ENCODE measurements at regions of chr14 and their contacts with region 1.

Region 1: DNA sequence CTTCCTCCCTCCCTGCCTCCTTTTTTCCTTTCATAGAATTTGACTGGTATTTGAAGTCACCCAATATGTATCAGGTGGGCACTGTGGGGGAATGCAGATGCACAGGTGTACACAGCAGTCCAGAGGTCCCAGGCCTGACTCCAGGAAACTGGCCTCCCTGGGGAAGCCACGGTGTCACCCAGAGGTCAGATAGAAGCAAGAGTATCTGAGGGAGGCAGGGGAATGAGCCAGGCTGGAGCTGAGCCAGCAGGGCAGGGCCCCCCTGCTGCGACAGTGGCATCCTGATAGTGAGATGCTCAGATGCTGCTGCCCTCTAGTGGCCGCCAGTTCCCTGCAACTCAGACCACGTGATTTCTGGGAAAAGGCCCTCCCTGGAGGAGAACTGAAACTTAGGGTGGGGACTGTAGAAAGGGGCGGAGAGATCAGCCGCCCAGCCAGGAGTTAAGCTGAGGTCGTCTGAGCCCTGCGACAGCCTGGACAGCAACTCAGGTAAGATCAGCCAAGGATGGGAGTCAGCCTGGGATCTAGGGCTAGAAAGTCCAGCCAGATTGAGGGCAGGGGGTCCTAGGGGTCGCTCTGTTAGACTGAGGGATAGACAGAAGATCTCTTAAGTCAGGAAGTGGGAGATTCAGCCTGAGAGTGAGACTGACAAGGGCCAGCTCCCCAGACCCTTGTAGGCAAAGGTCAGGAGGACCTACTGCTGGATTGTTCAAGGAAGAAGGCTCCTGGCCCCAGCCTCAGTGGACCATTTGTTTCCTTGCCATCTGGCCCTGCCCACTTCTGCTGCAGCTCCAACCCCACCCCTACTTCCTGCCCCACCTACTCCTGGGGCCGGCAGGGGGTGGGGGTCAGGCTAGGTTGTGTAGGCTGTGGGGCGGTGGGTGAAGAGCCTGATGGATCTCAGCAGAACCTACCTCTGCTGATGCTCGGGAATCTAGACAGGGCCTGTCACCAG is at the start of gene IRF9:
- DNase-seq: peak; percentile 97
- H3K4me3 ChIP-seq: peak within 1 kb of the TSS; percentile 37 to 79 (median 67)
- H3K27ac ChIP-seq: peak within 1 kb of the TSS; percentile 78
- H3K4me1 ChIP-seq: peaks cover 16% of the 10 kb centered on the region
- H3K27me3 ChIP-seq: no peaks in the 10 kb centered on the region
- CTCF ChIP-seq: peak; percentile 95 to 97
- POLR2A ChIP-seq: peak; percentile 88
- total RNA-seq, gene IRF9: 33.2 and 46.1 TPM in 2 replicates

Region 2: DNA sequence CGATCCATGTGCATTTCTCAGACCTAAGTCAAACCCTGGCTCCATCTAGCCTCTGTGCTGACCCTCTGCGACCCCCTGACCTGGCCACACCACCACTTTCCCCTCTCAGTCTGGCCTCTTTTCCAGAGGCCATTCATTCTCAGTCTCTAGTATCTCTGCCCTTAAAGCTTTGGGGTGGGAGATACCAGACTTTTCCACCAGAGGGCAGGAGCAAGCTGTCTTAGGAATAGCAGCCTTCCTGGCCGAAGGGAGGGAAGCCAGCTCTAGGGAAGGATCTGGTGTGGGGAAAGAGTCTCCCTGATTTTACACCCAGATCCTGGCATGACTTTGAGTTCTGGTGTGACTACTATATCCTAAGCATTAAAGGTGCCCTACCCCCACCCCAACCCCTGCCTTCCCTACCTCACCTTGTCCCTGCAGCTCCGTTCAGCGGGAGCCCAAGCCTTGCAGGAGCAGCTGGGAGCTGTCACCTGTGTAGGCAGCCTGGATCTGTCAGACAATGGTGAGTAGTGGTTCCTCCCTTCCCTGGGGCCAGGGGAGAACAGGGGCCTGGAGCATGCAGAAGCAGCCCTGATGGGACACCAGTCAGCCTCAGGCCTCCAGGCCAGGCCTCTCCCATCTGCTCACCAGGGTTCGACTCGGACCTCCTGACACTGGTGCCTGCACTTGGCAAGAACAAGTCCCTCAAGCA is 102.7 kb before region 1 on chr14:
- CTCF ChIA-PET with region 1: interaction called, 48 read pairs
- POLR2A ChIA-PET with region 1: no interaction called
- dilution Hi-C with region 1: no loop called
- intact Hi-C with region 1: loop called (anchors 1 kb)
- DNase-seq: peak; percentile 44
- H3K4me3 ChIP-seq: no peak overlapping the region
- H3K27ac ChIP-seq: no peak overlapping the region
- H3K4me1 ChIP-seq: no peaks in the 10 kb centered on the region
- H3K27me3 ChIP-seq: no peaks in the 10 kb centered on the region
- CTCF ChIP-seq: peak; percentile 62 to 64
- POLR2A ChIP-seq: no peak

Region 3: GRCh38 chr14:24108336-24108874 is 52.7 kb before region 1 on chr14:
- CTCF ChIA-PET with region 1: interaction called, 16 read pairs
- POLR2A ChIA-PET with region 1: no interaction called
- dilution Hi-C with region 1: no loop called
- intact Hi-C with region 1: no loop called
- DNase-seq: no peak
- H3K4me3 ChIP-seq: no peak overlapping the region
- H3K27ac ChIP-seq: no peak overlapping the region
- H3K4me1 ChIP-seq: peaks cover 18% of the 10 kb centered on the region
- H3K27me3 ChIP-seq: no peaks in the 10 kb centered on the region
- CTCF ChIP-seq: no peak
- POLR2A ChIP-seq: no peak

Region 4: GRCh38 chr14:24141097-24141880 is 19.8 kb before region 1 on chr14 and contains the start of gene EMC9:
- CTCF ChIA-PET with region 1: interaction called, 63 read pairs
- POLR2A ChIA-PET with region 1: interaction called, 6 read pairs
- dilution Hi-C with region 1: no loop called
- intact Hi-C with region 1: loop called (anchors 1 kb)
- DNase-seq: peak; percentile 100
- H3K4me3 ChIP-seq: peak within 1 kb of the TSS; percentile 79 to 99 (median 81)
- H3K27ac ChIP-seq: peak within 1 kb of the TSS; percentile 42
- H3K4me1 ChIP-seq: peaks cover 24% of the 10 kb centered on the region
- H3K27me3 ChIP-seq: no peaks in the 10 kb centered on the region
- CTCF ChIP-seq: peak; percentile 28 to 53
- POLR2A ChIP-seq: peak; percentile 78
- total RNA-seq, gene EMC9: 19.0 and 21.8 TPM in 2 replicates

Region 5: GRCh38 chr14:24188251-24189058 is 27.3 kb after region 1 on chr14 and contains the start of gene IPO4:
- CTCF ChIA-PET with region 1: interaction called, 3 read pairs
- POLR2A ChIA-PET with region 1: interaction called, 3 read pairs
- dilution Hi-C with region 1: no loop called
- intact Hi-C with region 1: loop called (anchors 2 kb)
- DNase-seq: peak; percentile 94
- H3K4me3 ChIP-seq: peak within 1 kb of the TSS; percentile 31 to 65 (median 37)
- H3K27ac ChIP-seq: peak within 1 kb of the TSS; percentile 45
- H3K4me1 ChIP-seq: peaks cover 6% of the 10 kb centered on the region
- H3K27me3 ChIP-seq: no peaks in the 10 kb centered on the region
- CTCF ChIP-seq: no peak
- POLR2A ChIP-seq: peak; percentile 94
- total RNA-seq, gene IPO4: 52.6 and 66.5 TPM in 2 replicates